ENCODE measurements at regions of chr10 and their contacts with region 1.

Region 1: DNA sequence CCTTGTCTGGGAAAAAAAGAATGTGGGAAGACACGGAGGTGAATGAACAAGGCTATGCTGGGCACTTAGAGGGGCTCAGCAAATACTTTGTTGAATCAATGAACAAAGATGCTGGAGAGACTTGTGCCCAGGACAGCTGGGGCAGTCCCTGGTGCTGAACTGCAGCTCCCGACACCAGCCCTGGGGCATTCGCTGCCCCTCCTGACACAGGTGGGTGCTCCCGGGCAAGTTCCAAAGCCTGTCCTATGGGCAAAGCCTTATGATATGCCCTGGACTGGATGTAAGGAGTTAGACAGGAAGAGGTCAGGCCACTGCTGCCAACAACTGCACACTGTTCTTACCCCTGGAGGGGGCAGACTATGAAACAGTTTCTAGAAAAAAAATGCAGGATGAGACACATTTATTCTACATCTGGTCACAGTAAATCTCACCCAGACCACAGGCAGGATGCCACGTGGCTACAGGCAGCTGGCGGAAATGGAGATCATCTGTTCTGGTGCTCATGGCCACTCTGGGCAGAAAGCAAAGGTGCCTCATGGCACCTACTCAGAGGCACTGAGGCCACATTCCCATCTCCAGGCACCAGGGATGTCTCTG is 21.9 kb upstream of the FRAT2 start:
- DNase-seq: no peak
- H3K4me3 Mint-ChIP-seq: no peak overlapping the region
- H3K27ac Mint-ChIP-seq: no peak overlapping the region
- H3K4me1 Mint-ChIP-seq: no peaks in the 10 kb centered on the region
- H3K27me3 Mint-ChIP-seq: no peaks in the 10 kb centered on the region

Region 2: DNA sequence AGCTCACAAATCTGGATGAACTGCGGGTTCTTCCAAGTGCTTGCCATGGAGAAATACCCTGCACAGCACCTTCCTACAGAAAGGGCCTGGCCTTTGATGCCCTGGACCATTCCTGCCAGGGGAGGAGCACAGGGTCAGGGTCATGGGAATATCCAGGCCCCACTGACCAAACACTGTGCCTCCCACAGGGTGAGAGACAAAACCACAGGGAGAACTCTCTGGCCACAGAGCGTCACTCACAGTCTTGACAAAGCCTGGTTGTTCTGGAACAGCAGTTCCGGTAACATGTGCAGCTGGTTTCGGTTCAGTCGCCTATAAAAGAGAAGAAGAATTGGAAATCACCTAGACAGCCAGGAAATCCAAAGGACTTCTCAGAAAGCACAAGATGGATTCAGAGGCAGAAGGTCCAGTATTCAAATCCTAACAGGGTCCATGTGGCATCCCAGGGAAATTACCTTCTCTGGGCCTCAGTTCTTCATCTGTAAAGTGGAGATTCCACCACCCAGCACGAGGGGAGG is 198.8 kb before region 1 on chr10:
- CTCF ChIA-PET with region 1: no interaction called
- POLR2A ChIA-PET with region 1: no interaction called
- DNase-seq: no peak
- H3K4me3 Mint-ChIP-seq: no peak overlapping the region
- H3K27ac Mint-ChIP-seq: no peak overlapping the region
- H3K4me1 Mint-ChIP-seq: no peaks in the 10 kb centered on the region
- H3K27me3 Mint-ChIP-seq: no peaks in the 10 kb centered on the region

Region 3: GRCh38 chr10:97372233-97372875 is 15.9 kb after region 1 on chr10:
- CTCF ChIA-PET with region 1: interaction called, 10 read pairs
- POLR2A ChIA-PET with region 1: no interaction called
- DNase-seq: no peak
- H3K4me3 Mint-ChIP-seq: no peak overlapping the region
- H3K27ac Mint-ChIP-seq: no peak overlapping the region
- H3K4me1 Mint-ChIP-seq: peaks cover 3% of the 10 kb centered on the region
- H3K27me3 Mint-ChIP-seq: no peaks in the 10 kb centered on the region

Region 4: DNA sequence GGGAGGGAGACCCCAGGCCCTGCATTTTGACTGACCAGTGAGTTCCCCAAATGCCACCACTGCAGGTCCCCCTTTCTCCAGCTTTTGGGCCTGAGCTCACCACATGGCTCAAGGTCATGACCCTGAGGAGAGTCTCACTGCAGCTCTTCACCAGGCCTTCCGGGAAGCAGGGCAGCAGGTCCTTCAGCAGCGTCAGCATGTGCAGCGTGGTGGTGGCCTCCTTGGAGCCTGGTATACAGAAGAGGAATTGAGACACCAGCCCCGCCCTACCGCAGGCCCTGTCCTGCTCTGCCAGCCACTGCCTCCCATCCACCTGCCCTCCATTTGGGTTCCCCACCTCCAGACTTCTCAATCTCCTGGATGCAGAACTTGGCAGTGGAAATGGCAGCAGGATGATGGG is 31.7 kb after region 1 on chr10:
- CTCF ChIA-PET with region 1: no interaction called
- POLR2A ChIA-PET with region 1: no interaction called
- DNase-seq: no peak
- H3K4me3 Mint-ChIP-seq: no peak overlapping the region
- H3K27ac Mint-ChIP-seq: no peak overlapping the region
- H3K4me1 Mint-ChIP-seq: peaks cover 2% of the 10 kb centered on the region
- H3K27me3 Mint-ChIP-seq: no peaks in the 10 kb centered on the region

Measured in activated CD4-positive, alpha-beta T cell treated with anti-CD3 and anti-CD28 coated beads, Interleukin-2, amount 10 ng/mL, durations not matched to agents 7 days and 5 days (primary cell).